CD4-positive, alpha-beta T cell (primary cell): ENCODE measurements at regions of chrX and their contacts with region 1.

Region 1: GRCh38 chrX:19552793-19553192 is 37.5 kb upstream of the MAP3K15 start:
- DNase-seq: no peak
- ATAC-seq: no peak
- H3K4me3 ChIP-seq: no peak overlapping the region
- H3K4me3 Mint-ChIP-seq: no peak overlapping the region
- H3K27ac ChIP-seq: no peak overlapping the region
- H3K27ac Mint-ChIP-seq: peak overlapping the region; percentile 30
- H3K4me1 ChIP-seq: peaks cover 7% of the 10 kb centered on the region
- H3K4me1 Mint-ChIP-seq: peaks cover 3% of the 10 kb centered on the region
- H3K27me3 ChIP-seq: no peaks in the 10 kb centered on the region
- H3K27me3 Mint-ChIP-seq: no peaks in the 10 kb centered on the region
- CTCF ChIP-seq: no peak

Region 2: GRCh38 chrX:18041656-18042055 is 1511.1 kb before region 1 on chrX:
- CTCF ChIA-PET with region 1: no interaction called
- POLR2A ChIA-PET with region 1: no interaction called
- intact Hi-C with region 1: no loop called
- DNase-seq: no peak
- ATAC-seq: no peak
- H3K4me3 ChIP-seq: no peak overlapping the region
- H3K4me3 Mint-ChIP-seq: no peak overlapping the region
- H3K27ac ChIP-seq: no peak overlapping the region
- H3K27ac Mint-ChIP-seq: no peak overlapping the region
- H3K4me1 ChIP-seq: no peaks in the 10 kb centered on the region
- H3K4me1 Mint-ChIP-seq: no peaks in the 10 kb centered on the region
- H3K27me3 ChIP-seq: no peaks in the 10 kb centered on the region
- H3K27me3 Mint-ChIP-seq: no peaks in the 10 kb centered on the region
- CTCF ChIP-seq: no peak

Region 3: DNA sequence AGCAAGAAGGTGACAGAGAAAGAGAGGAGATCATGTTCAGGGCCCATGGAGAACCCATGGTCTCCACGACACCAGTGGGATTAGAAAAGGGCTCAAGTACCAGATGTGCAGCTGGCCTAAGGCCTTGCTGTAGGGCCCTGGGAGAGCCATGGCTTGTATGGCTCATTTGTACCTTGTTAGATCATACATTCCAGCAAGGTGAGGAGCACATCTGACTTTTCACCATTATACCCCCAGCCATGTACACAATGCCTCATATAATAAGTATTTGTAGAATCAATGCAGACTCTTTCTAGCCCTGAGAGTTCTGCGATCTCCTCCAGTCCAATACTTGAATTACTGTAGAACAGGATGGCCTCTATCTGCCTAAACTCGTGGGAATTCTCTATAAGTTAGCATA is 56.7 kb after region 1 on chrX:
- CTCF ChIA-PET with region 1: no interaction called
- POLR2A ChIA-PET with region 1: no interaction called
- intact Hi-C with region 1: loop called in 1 of 2 experiments (anchors 2 kb)
- DNase-seq: no peak
- ATAC-seq: no peak
- H3K4me3 ChIP-seq: no peak overlapping the region
- H3K4me3 Mint-ChIP-seq: no peak overlapping the region
- H3K27ac ChIP-seq: no peak overlapping the region
- H3K27ac Mint-ChIP-seq: peak overlapping the region; percentile 47
- H3K4me1 ChIP-seq: peaks cover 4% of the 10 kb centered on the region
- H3K4me1 Mint-ChIP-seq: peaks cover 18% of the 10 kb centered on the region
- H3K27me3 ChIP-seq: no peaks in the 10 kb centered on the region
- H3K27me3 Mint-ChIP-seq: no peaks in the 10 kb centered on the region
- CTCF ChIP-seq: no peak